RWPE1 (cell line): ENCODE measurements at regions of chr7 and their contacts with region 1.

Region 1: DNA sequence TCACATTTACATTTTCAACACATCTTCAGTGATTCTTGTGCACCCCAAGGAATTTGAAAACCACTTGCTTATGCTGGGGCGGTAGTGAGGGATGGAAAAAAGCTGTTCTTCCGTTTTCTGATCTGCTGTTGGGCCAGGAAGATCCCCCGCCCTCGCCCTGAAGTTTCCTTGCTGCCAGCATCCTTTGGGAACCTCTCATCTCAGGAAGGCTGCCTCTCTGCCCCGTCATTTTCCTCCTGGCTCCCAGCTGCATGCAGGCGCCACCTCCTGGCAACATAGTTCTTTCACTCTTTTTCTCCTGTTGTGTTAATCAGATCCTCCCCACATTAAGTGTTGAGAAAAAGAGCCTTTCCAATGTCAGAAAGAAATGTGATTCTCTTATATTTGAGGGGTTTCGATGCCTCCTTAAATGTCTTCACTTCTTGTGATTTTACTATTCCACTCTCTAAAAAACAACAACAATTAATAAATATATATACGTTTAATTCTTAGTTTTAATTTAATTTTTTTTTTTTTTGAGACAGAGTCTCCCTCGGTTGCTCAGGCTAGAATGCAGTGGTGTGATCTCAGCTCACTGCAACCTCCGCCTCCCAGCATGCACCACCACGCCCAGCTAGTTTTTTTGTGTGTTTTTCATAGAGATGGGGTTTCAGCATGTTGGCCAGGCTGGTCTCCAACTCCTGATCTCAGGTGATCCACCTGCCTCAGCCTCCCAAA is 122.9 kb downstream of the RALA start:
- DNase-seq: peak; percentile 89
- H3K27ac ChIP-seq: peak overlapping the region; percentile 37
- CTCF ChIP-seq: peak; percentile 91

Region 2: GRCh38 chr7:39304668-39305405 is 441.4 kb before region 1 on chr7:
- CTCF ChIA-PET with region 1: no interaction called
- POLR2A ChIA-PET with region 1: no interaction called
- DNase-seq: no peak
- H3K27ac ChIP-seq: no peak overlapping the region
- CTCF ChIP-seq: no peak

Region 3: DNA sequence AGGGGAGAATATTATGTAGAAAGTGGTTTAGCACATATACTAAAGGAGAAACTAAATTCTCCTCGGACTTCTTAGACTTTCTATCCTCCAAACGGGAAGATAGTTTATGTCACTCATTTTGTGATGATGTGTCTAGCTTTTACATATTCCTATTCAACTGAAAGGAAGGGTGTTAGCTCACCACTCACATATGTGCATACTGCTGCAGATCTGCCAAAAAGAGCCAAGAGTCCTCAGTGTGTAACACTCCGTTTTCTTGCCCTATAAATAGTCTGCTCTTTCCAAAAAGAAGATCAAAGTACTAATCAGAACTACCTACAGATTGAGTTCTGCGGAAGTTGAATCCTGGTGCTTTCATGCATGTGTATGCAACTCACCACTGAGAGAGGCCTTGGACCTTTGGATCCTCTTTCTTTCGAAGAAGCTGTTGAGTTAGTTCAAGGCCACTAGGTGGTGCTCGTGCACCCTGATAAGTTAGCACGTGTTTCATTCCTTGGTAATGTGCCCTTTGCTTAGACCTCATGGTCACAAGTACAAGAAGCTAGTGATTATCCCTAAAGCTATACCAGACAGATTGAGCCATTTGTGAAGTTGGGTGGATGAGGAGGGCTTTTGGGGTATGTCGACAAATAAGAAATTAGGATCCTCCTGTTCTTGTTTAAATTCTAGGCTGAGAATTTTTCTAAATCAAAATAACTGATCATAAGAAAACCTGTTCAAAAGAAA is 165.9 kb before region 1 on chr7:
- CTCF ChIA-PET with region 1: interaction called, 40 read pairs
- POLR2A ChIA-PET with region 1: interaction called, 4 read pairs
- DNase-seq: peak; percentile 78
- H3K27ac ChIP-seq: no peak overlapping the region
- CTCF ChIP-seq: peak; percentile 90

Region 4: GRCh38 chr7:39623732-39624441 is 122.4 kb before region 1 on chr7:
- CTCF ChIA-PET with region 1: interaction called, 4 read pairs
- POLR2A ChIA-PET with region 1: interaction called, 10 read pairs
- DNase-seq: peak; percentile 54
- H3K27ac ChIP-seq: peak overlapping the region; percentile 87
- CTCF ChIP-seq: no peak

Region 5: GRCh38 chr7:39816462-39817060 is 70.3 kb after region 1 on chr7:
- CTCF ChIA-PET with region 1: no interaction called
- POLR2A ChIA-PET with region 1: no interaction called
- DNase-seq: no peak
- H3K27ac ChIP-seq: no peak overlapping the region
- CTCF ChIP-seq: no peak